Naive thymus-derived CD4-positive, alpha-beta T cell (primary cell): ENCODE measurements at regions of chr15 and their contacts with region 1.

Region 1: DNA sequence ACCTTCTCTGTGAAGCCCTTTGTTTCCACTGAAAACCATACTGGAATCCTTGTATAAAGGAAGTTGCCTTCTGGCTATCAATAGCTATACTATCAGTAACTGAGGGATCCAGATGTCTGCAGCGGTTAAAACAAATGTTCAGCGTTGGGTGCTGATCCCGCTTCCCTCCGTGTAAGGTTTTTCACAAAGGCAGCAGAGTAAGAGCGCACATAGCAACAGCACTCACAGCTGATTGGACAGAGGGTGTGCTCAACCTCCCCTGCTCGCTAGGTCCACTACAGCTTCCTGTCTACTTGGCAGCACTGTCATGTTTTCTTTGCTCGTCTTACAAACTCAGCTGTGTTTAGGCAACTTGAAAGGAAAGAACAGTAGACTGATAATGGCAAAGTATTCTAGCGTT is 27.3 kb downstream of the ATOSA start:
- DNase-seq: peak in 7 of 9 donors; percentile 9 to 41 (median 32)
- ATAC-seq: peak; percentile 97
- H3K4me3 ChIP-seq: no peak overlapping the region
- H3K4me3 Mint-ChIP-seq: peak overlapping the region in 5 of 10 donors; percentile 23 to 62 (median 50)
- H3K27ac ChIP-seq: no peak overlapping the region
- H3K27ac Mint-ChIP-seq: peak overlapping the region in 4 of 9 donors; percentile 28 to 64 (median 51)
- H3K4me1 ChIP-seq: no peaks in the 10 kb centered on the region
- H3K4me1 Mint-ChIP-seq: peaks cover 6 to 41% (median 15%) of the 10 kb centered on the region in 7 donors
- H3K27me3 ChIP-seq: no peaks in the 10 kb centered on the region
- H3K27me3 Mint-ChIP-seq: no peaks in the 10 kb centered on the region

Region 2: DNA sequence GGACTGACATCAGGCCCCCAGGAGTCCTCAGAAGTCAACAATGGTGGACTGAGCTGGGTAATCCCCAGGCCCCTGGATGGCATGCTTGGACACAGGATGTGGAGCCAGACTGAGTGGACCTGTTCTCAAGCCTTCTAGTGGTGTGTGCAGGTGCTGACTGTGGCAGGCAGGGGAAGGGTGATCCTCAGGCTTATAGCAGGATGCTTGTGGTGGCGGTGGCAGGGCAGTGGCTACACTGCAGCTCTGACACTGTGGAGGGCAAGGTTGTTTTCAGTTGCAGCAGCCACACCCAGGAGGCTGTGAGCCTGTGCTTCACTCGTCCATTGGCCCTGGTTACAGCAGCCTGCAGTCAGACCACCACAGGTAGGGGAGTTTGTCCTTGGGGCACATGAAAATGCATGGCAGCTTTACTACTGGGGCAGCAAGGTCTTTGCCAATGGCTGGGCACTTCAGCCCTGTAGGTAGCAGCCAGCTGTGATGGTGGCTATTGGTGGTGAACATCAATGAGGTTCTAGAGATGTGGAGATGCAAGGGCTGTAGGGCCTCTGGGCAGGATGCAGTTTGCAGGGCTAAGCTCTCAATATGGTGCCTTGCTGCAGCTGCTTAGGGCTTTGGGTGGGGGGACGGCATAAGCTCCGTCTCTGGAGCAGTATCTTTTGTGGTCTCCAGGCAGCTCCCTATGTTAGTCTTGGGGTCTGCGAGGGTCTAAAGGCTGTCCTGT is 105.7 kb before region 1 on chr15:
- CTCF ChIA-PET with region 1: no interaction called
- POLR2A ChIA-PET with region 1: no interaction called
- intact Hi-C with region 1: no loop called
- DNase-seq: no peak
- ATAC-seq: peak; percentile 72
- H3K4me3 ChIP-seq: no peak overlapping the region
- H3K4me3 Mint-ChIP-seq: peak overlapping the region in 1 of 10 donors; percentile 28
- H3K27ac ChIP-seq: no peak overlapping the region
- H3K27ac Mint-ChIP-seq: peak overlapping the region in 3 of 9 donors; percentile 17 to 62 (median 38)
- H3K4me1 ChIP-seq: peaks cover 0 to 5% of the 10 kb centered on the region in 2 donors
- H3K4me1 Mint-ChIP-seq: peaks cover 0 to 14% (median 0%) of the 10 kb centered on the region in 7 donors
- H3K27me3 ChIP-seq: no peaks in the 10 kb centered on the region
- H3K27me3 Mint-ChIP-seq: peaks cover 0 to 6% (median 0%) of the 10 kb centered on the region in 5 donors

Region 3: GRCh38 chr15:52615284-52615683 is 36.6 kb before region 1 on chr15:
- CTCF ChIA-PET with region 1: no interaction called
- POLR2A ChIA-PET with region 1: no interaction called
- intact Hi-C with region 1: no loop called
- DNase-seq: no peak
- ATAC-seq: no peak
- H3K4me3 ChIP-seq: no peak overlapping the region
- H3K4me3 Mint-ChIP-seq: no peak overlapping the region
- H3K27ac ChIP-seq: no peak overlapping the region
- H3K27ac Mint-ChIP-seq: no peak overlapping the region
- H3K4me1 ChIP-seq: no peaks in the 10 kb centered on the region
- H3K4me1 Mint-ChIP-seq: peaks cover 0 to 11% (median 4%) of the 10 kb centered on the region in 7 donors
- H3K27me3 ChIP-seq: no peaks in the 10 kb centered on the region
- H3K27me3 Mint-ChIP-seq: no peaks in the 10 kb centered on the region

Region 4: GRCh38 chr15:52730173-52730572 is 78.3 kb after region 1 on chr15:
- CTCF ChIA-PET with region 1: no interaction called
- POLR2A ChIA-PET with region 1: no interaction called
- intact Hi-C with region 1: loop called in 1 of 2 experiments (anchors 1 kb)
- DNase-seq: peak in 7 of 9 donors; percentile 53 to 82 (median 75)
- ATAC-seq: peak; percentile 96
- H3K4me3 ChIP-seq: no peak overlapping the region
- H3K4me3 Mint-ChIP-seq: peak overlapping the region; percentile 10 to 69 (median 50)
- H3K27ac ChIP-seq: no peak overlapping the region
- H3K27ac Mint-ChIP-seq: peak overlapping the region; percentile 56 to 94 (median 87)
- H3K4me1 ChIP-seq: peaks cover 11 to 15% of the 10 kb centered on the region in 2 donors
- H3K4me1 Mint-ChIP-seq: peaks cover 6 to 31% (median 20%) of the 10 kb centered on the region in 7 donors
- H3K27me3 ChIP-seq: no peaks in the 10 kb centered on the region
- H3K27me3 Mint-ChIP-seq: no peaks in the 10 kb centered on the region

Region 5: DNA sequence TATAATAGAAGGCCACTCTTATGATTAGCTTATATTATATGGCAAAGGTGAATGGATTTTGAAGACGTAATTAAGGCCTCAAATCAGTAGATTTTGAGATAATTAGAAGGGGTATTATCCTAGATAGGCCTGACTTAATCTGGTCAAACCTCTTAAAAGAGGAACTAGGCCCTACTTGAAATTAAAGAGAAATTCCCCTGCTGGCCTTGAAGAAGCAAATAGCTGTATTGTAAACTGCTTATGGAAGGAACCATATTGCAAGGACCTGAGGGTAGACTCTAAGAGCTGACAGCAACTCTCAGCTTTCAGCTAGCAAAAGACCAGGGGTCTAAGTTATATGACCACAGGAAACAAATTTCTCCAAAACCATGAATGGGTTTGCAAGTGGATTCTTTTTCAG is 357.2 kb after region 1 on chr15:
- CTCF ChIA-PET with region 1: no interaction called
- POLR2A ChIA-PET with region 1: no interaction called
- intact Hi-C with region 1: no loop called
- DNase-seq: no peak
- ATAC-seq: no peak
- H3K4me3 ChIP-seq: no peak overlapping the region
- H3K4me3 Mint-ChIP-seq: no peak overlapping the region
- H3K27ac ChIP-seq: no peak overlapping the region
- H3K27ac Mint-ChIP-seq: no peak overlapping the region
- H3K4me1 ChIP-seq: no peaks in the 10 kb centered on the region
- H3K4me1 Mint-ChIP-seq: peaks cover 0 to 2% (median 0%) of the 10 kb centered on the region in 7 donors
- H3K27me3 ChIP-seq: no peaks in the 10 kb centered on the region
- H3K27me3 Mint-ChIP-seq: peaks cover 0 to 24% (median 13%) of the 10 kb centered on the region in 5 donors